Ascending aorta (tissue), 2 donors: ENCODE measurements at regions of chr3 and their contacts with region 1.

Region 1: DNA sequence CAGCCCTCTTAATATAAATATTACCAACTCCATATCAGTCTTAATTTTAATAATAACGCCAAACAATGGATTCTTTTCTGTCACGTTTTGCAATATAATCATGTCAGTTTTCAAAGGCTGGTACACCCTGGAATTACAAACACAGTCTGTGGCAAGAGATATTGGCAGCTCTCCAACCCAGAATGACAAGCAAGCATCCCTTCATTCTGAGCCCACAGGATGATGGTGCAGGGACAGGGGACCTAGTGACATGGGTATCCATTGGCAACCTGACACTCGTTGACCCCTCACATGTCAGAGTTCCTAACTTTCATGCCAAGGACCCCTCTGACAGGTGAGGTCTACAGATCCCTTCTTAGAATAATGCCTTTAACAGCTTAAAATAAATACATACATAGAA is 154.5 kb upstream of the TSC22D2 start:
- DNase-seq: peak in 1 of 2 donors; percentile 69
- H3K4me3 ChIP-seq: no peak overlapping the region
- H3K27ac ChIP-seq: peak overlapping the region; percentile 62 to 92
- H3K4me1 ChIP-seq: peaks cover 16 to 40% of the 10 kb centered on the region in 2 donors
- H3K27me3 ChIP-seq: no peaks in the 10 kb centered on the region
- CTCF ChIP-seq: no peak

Region 2: GRCh38 chr3:150216041-150216811 is 37.4 kb before region 1 on chr3:
- intact Hi-C with region 1: loop called (anchors 5 kb)
- DNase-seq: peak; percentile 33 to 84
- H3K4me3 ChIP-seq: peak overlapping the region in 1 of 2 donors; percentile 39
- H3K27ac ChIP-seq: peak overlapping the region; percentile 75 to 80
- H3K4me1 ChIP-seq: peaks cover 5 to 10% of the 10 kb centered on the region in 2 donors
- H3K27me3 ChIP-seq: no peaks in the 10 kb centered on the region
- CTCF ChIP-seq: no peak

Region 3: DNA sequence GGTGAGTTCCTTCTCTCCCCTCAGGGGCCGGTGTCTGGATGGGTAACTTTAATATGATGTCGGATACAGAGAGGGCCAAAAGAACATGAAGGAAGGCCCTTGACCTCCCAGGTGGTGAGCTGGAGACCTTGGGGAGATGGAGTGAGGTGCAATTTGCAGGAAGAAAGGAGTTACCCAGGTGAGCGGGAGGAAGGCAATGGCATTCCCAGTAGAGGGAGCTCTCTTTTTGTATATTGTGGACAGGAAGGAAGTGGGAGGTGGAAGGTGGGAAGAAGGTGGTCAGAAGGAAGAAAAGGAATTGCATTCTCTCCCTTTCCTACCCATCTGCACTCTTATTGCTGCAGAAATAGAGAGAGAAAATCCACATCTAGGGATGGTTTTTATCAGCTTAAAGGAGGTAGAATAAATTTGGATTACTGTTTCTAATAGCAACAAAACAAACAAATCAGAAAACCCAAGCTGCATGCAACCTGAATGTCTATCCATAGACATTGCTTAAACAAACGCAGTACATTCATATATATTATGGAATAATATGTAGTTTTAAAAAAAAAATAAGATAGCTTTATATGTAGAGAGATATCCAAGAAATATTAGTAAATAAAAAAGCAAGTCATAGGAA is 14.5 kb before region 1 on chr3:
- intact Hi-C with region 1: loop called (anchors 2 kb)
- DNase-seq: no peak
- H3K4me3 ChIP-seq: no peak overlapping the region
- H3K27ac ChIP-seq: peak overlapping the region; percentile 87
- H3K4me1 ChIP-seq: peaks cover 2 to 34% of the 10 kb centered on the region in 2 donors
- H3K27me3 ChIP-seq: no peaks in the 10 kb centered on the region
- CTCF ChIP-seq: peak in 1 of 3 experiments; percentile 14

Region 4: GRCh38 chr3:150348500-150348899 is 94.9 kb after region 1 on chr3:
- intact Hi-C with region 1: loop called (anchors 5 kb)
- DNase-seq: peak in 1 of 2 donors; percentile 84
- H3K4me3 ChIP-seq: no peak overlapping the region
- H3K27ac ChIP-seq: peak overlapping the region; percentile 54 to 55
- H3K4me1 ChIP-seq: peaks cover 0 to 22% of the 10 kb centered on the region in 2 donors
- H3K27me3 ChIP-seq: no peaks in the 10 kb centered on the region
- CTCF ChIP-seq: no peak